Activated CD4-positive, alpha-beta T cell treated with anti-CD3 and anti-CD28 coated beads, Interleukin-2, amount 10 ng/mL, durations not matched to agents 7 days and 5 days (primary cell): ENCODE measurements at regions of chr1 and their contacts with region 1.

Region 1: GRCh38 chr1:86704458-86704971 is at the start of gene SH3GLB1:
- DNase-seq: peak; percentile 88
- H3K4me3 Mint-ChIP-seq: peak within 1 kb of the TSS; percentile 100
- H3K27ac Mint-ChIP-seq: peak within 1 kb of the TSS; percentile 98
- H3K4me1 Mint-ChIP-seq: peaks cover 43% of the 10 kb centered on the region
- H3K27me3 Mint-ChIP-seq: no peaks in the 10 kb centered on the region
- total RNA-seq, gene SH3GLB1: 66.8 to 75.3 TPM

Region 2: DNA sequence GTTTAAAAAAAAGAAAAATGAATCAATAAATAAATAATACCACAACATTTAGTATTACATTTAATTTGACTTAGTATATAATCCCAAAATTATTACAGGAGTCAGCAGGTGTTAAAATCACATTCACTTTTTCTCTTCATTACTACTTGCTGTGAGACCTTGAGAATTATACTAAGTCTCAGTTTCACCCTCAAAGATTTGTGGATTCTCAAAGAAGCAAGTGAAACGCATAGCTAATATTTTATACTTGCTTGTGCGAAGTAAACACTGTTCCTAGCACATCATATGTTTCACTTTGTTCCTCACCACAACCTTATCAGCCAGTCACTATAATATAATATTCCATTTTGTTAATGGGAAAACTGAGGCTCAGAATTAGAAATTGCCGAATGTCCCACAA is 231.7 kb before region 1 on chr1:
- CTCF ChIA-PET with region 1: interaction called, 11 read pairs
- POLR2A ChIA-PET with region 1: no interaction called
- DNase-seq: no peak
- H3K4me3 Mint-ChIP-seq: no peak overlapping the region
- H3K27ac Mint-ChIP-seq: no peak overlapping the region
- H3K4me1 Mint-ChIP-seq: no peaks in the 10 kb centered on the region
- H3K27me3 Mint-ChIP-seq: peaks cover 10% of the 10 kb centered on the region

Region 3: DNA sequence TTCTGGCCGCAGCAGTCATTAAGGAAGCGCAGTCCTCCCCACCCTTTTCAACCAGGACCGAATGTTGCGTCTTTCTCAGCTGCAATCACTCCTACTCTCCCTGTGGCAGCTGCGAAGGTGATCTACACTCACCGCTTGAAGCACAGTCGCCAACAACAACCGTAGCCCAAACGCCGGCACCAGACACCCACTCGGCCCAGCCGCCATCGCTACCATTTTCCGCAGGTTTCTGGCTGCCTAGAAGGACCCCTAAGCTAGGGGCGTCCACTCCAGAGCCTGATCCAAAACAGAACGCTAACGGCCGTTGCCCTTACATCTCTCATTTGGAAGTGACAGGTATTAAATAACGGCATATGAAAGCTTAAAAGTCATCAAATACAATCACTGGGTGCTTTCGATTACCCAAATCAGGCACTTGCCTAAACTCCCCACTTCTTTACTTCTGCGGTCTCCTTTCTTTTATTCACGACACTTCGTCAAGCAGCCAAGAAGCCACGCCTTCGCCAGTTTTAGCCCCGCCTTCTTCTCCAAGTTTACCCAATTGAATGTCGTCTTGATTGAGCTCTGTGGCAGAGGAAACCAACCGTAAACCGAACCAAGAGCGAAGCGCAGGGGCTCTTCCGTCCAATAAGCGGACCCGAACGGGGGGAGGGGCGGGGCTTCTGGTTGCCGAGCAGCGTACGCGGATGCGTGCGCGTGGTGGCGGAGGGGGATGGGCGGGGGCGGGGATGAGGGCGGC is 209.6 kb after region 1 on chr1 and contains the start of gene SELENOF:
- CTCF ChIA-PET with region 1: interaction called, 14 read pairs
- POLR2A ChIA-PET with region 1: interaction called, 4 read pairs
- DNase-seq: peak; percentile 99
- H3K4me3 Mint-ChIP-seq: no peak within 1 kb of the TSS
- H3K27ac Mint-ChIP-seq: no peak within 1 kb of the TSS
- H3K4me1 Mint-ChIP-seq: peaks cover 42% of the 10 kb centered on the region
- H3K27me3 Mint-ChIP-seq: no peaks in the 10 kb centered on the region
- total RNA-seq, gene SELENOF: 175 to 200 TPM